ENCODE measurements at regions of chr9 and their contacts with region 1.

Region 1: DNA sequence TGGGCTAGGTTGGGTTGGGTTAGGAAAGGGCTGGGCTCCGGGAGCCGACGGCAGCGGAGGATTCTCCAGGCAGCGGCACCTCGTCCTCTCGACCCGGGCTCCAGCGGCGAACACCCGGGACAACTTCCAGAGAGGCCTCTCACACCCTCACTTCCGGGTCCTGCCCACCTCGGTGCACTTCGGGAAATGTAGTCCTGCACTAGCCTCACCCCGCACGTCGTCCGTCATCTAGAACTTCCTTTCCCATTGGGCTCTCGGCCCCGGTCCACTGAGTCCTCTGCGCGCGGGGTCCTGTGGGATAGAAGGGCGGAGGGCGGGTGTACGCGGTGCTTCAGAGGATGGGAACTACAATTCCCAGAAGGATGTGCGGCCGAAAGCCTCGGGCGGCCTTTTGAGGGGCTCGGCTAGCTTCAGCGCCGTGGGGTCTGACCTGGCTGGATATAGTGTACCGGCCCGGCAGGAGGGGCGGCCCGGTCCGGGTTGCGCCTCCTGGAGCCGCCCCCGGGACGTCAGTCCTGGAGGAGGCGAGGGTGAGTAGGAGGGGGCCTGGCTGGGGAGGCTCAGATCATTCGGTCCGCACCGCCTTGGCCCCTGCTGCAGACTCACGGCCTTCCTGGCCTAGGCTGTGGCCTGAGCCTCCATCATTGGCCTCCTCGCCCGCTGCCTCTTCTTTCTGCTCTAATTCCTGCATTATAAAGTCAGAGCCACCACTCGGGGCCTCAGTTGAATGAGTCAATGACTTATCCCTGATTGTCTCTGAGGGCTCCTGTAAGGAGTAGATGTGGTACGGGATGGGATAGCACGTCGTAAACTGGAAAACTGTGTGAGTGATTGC is at the starts of genes ERP44 and INVS:
- DNase-seq: peak; percentile 99
- H3K4me3 Mint-ChIP-seq: peak within 1 kb of the TSS; percentile 100
- H3K27ac Mint-ChIP-seq: peak within 1 kb of the TSS; percentile 96
- H3K4me1 Mint-ChIP-seq: peaks cover 26% of the 10 kb centered on the region
- H3K27me3 Mint-ChIP-seq: no peaks in the 10 kb centered on the region
- total RNA-seq, gene ERP44: 16.4 and 18.7 TPM in 2 replicates
- total RNA-seq, gene INVS: 14.9 and 16.9 TPM in 2 replicates

Region 2: GRCh38 chr9:99221621-99222415 is 877.3 kb before region 1 on chr9 and contains the starts of genes ALG2 and SEC61B:
- intact Hi-C with region 1: loop called (anchors 5 kb)
- DNase-seq: peak; percentile 98
- H3K4me3 Mint-ChIP-seq: peak within 1 kb of the TSS; percentile 97
- H3K27ac Mint-ChIP-seq: peak within 1 kb of the TSS; percentile 99
- H3K4me1 Mint-ChIP-seq: peaks cover 51% of the 10 kb centered on the region
- H3K27me3 Mint-ChIP-seq: no peaks in the 10 kb centered on the region
- total RNA-seq, gene ALG2: 29.2 and 31.0 TPM in 2 replicates
- total RNA-seq, gene SEC61B: 169 and 170 TPM in 2 replicates

Region 3: DNA sequence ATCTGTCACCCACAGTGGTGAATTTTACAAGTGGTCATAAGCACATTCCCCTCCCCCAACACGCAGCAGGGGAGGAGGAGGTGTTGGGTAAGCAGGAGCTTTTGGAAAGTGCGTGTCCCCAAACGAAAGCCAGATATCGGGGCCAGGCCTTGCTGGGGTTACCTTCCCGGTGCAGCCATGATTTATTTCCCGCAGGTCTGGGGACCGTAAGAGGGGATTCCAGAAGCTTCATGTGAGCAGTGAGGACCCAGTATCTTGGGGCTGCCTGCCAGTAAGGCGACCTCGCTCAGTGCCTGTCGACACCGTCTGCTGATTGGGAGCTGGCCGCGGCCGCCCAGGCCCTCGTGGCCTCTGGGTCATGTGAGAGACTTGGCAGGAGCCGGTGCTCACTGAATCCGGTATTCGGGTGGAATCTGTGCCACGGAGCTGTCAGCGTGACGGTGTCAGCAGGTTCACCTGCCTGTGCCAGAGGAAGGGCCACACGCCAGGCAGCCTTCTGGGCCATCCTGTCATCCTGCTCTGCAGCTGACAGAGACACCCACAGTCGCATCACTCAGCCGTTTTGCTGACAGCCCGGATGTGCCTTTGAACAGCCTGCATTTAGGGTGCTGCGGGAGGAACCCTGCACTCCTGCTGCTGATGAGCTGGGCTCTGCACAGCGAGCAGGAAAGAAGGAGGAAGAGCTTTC is 839.7 kb before region 1 on chr9:
- intact Hi-C with region 1: loop called (anchors 10 kb)
- DNase-seq: peak; percentile 85
- H3K4me3 Mint-ChIP-seq: peak overlapping the region; percentile 55
- H3K27ac Mint-ChIP-seq: peak overlapping the region; percentile 83
- H3K4me1 Mint-ChIP-seq: peaks cover 31% of the 10 kb centered on the region
- H3K27me3 Mint-ChIP-seq: no peaks in the 10 kb centered on the region

Region 4: DNA sequence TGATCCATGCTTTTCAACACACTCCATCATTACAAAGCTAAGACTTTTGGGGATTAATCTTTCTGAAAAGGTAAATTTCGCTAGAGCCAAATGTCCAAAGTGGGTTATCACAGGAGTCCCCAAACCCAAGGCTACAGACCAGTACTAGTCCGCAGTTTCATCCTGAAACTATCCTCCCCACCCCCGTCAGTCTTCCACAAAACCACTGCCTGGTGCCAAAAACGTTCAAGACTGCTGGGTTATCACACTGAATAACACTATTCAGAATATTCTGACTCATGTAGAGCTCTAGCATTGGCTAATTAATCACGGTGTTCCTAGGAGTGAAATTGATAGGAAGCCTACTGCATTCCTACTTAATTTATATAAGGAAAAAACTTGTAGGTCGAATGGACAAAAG is 25.0 kb before region 1 on chr9:
- intact Hi-C with region 1: no loop called
- DNase-seq: no peak
- H3K4me3 Mint-ChIP-seq: no peak overlapping the region
- H3K27ac Mint-ChIP-seq: no peak overlapping the region
- H3K4me1 Mint-ChIP-seq: peaks cover 9% of the 10 kb centered on the region
- H3K27me3 Mint-ChIP-seq: no peaks in the 10 kb centered on the region

Region 5: DNA sequence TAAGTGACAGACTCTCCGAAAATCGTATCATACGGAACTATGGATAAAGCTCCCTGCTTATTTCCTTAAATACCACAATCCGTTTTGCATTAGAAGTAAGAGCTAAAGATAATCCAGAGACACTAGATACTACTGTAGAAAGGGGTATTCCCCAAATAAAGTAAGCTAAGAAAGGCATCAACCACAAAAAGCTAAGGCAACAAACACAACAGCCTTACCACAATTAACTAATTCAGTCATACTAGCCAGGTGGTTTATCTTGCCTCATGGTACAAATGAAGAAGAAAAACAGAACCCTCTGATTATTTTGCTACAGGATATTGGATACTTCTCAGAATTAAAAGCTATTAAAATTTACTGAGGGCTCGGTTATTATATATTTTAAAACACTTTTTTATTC is 14.4 kb before region 1 on chr9:
- intact Hi-C with region 1: loop called (anchors 1 kb)
- DNase-seq: no peak
- H3K4me3 Mint-ChIP-seq: peak overlapping the region; percentile 27
- H3K27ac Mint-ChIP-seq: no peak overlapping the region
- H3K4me1 Mint-ChIP-seq: peaks cover 49% of the 10 kb centered on the region
- H3K27me3 Mint-ChIP-seq: no peaks in the 10 kb centered on the region

Region 6: DNA sequence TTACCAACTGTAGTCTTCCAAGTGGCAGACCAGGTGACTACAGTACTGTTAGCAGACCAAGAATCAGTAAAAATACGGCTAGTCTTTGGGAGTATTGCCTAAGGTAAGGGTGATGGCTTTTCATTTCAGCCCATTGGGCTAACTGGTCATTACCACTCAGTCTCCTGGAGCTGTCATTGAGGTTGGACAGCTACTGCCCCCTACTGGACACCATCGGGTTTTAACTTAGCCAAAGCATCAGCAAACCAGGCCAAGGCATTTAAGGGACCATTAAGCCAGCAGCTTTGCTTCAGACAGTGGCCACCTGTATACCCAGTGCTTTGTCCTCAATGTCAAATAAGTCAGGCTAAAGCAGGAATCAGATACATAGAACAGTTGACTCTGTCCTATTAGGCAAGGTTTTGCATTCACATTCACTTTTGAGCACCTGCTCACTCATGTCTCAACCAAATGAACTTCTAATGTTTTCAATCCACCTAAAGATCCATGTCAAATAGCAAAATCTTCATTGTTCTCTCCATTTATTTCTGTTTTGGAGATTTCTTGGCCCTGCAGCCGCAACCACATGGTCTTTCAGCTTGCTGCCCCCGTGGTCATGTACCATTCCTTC is 117.2 kb after region 1 on chr9:
- intact Hi-C with region 1: loop called (anchors 5 kb)
- DNase-seq: peak; percentile 89
- H3K4me3 Mint-ChIP-seq: no peak overlapping the region
- H3K27ac Mint-ChIP-seq: no peak overlapping the region
- H3K4me1 Mint-ChIP-seq: peaks cover 2% of the 10 kb centered on the region
- H3K27me3 Mint-ChIP-seq: no peaks in the 10 kb centered on the region

Region 7: GRCh38 chr9:100352727-100353505 is 253.8 kb after region 1 on chr9 and contains the start of gene TEX10:
- intact Hi-C with region 1: loop called (anchors 1 kb)
- DNase-seq: peak; percentile 97
- H3K4me3 Mint-ChIP-seq: peak within 1 kb of the TSS; percentile 88
- H3K27ac Mint-ChIP-seq: peak within 1 kb of the TSS; percentile 56
- H3K4me1 Mint-ChIP-seq: peaks cover 32% of the 10 kb centered on the region
- H3K27me3 Mint-ChIP-seq: no peaks in the 10 kb centered on the region
- total RNA-seq, gene TEX10: 31.3 and 32.8 TPM in 2 replicates

Region 8: DNA sequence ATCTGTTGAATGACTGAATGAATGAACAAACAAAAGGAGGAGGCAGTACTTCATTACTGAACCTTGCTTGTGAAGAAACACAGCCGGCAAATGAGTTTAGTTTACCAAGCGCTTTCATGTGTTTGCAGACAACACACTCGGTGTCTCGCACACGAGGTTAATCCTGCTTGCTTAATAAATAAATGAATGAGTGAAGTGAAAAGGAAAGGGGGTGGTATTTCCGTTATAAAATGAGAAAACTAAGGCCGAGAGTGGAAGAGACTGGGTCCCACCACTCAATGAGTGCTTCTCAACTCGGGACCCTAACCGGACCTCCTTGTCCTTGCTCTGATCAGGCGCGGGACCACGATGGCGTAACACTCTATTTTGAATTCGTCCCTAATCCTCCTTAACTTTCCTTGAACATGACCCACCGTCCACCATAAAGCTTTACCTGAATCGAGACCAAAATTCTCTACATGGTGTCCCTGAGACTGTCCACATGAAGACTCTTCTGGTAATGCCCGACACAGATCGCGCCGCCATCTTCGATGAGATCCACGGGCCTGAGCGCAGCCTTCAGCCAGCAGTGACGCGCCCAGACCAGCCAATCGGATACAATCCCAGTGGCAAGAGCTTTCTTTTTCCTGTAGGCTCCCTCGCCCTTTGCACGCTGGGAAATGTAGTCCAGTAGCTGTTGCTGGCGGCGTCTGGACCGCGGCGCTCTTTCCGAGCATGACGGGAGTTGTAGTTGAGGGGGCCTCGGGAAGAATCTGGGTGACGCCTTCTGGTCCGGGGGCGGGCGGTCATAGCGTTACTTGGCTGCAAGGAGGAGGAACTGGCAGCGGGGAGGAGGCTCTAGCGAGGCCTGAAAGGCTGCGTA is 1299.2 kb after region 1 on chr9 and contains the starts of genes MRPL50 and ZNF189:
- intact Hi-C with region 1: loop called (anchors 2 kb)
- DNase-seq: peak; percentile 98
- H3K4me3 Mint-ChIP-seq: peak within 1 kb of the TSS; percentile 94
- H3K27ac Mint-ChIP-seq: peak within 1 kb of the TSS; percentile 98
- H3K4me1 Mint-ChIP-seq: peaks cover 44% of the 10 kb centered on the region
- H3K27me3 Mint-ChIP-seq: no peaks in the 10 kb centered on the region
- total RNA-seq, gene MRPL50: 18.6 and 19.8 TPM in 2 replicates
- total RNA-seq, gene ZNF189: 11.7 and 12.7 TPM in 2 replicates